ENCODE measurements at regions of chr18 and their contacts with region 1.

Region 1: GRCh38 chr18:681985-682384 is 24.5 kb downstream of the TYMS start:
- DNase-seq: peak; percentile 71
- H3K4me3 Mint-ChIP-seq: peak overlapping the region; percentile 30
- H3K27ac Mint-ChIP-seq: peak overlapping the region; percentile 87
- H3K4me1 Mint-ChIP-seq: peaks cover 25% of the 10 kb centered on the region
- H3K27me3 Mint-ChIP-seq: no peaks in the 10 kb centered on the region

Region 2: GRCh38 chr18:513826-514560 is 168.0 kb before region 1 on chr18:
- intact Hi-C with region 1: no loop called
- DNase-seq: no peak
- H3K4me3 Mint-ChIP-seq: no peak overlapping the region
- H3K27ac Mint-ChIP-seq: no peak overlapping the region
- H3K4me1 Mint-ChIP-seq: peaks cover 10% of the 10 kb centered on the region
- H3K27me3 Mint-ChIP-seq: no peaks in the 10 kb centered on the region

Region 3: DNA sequence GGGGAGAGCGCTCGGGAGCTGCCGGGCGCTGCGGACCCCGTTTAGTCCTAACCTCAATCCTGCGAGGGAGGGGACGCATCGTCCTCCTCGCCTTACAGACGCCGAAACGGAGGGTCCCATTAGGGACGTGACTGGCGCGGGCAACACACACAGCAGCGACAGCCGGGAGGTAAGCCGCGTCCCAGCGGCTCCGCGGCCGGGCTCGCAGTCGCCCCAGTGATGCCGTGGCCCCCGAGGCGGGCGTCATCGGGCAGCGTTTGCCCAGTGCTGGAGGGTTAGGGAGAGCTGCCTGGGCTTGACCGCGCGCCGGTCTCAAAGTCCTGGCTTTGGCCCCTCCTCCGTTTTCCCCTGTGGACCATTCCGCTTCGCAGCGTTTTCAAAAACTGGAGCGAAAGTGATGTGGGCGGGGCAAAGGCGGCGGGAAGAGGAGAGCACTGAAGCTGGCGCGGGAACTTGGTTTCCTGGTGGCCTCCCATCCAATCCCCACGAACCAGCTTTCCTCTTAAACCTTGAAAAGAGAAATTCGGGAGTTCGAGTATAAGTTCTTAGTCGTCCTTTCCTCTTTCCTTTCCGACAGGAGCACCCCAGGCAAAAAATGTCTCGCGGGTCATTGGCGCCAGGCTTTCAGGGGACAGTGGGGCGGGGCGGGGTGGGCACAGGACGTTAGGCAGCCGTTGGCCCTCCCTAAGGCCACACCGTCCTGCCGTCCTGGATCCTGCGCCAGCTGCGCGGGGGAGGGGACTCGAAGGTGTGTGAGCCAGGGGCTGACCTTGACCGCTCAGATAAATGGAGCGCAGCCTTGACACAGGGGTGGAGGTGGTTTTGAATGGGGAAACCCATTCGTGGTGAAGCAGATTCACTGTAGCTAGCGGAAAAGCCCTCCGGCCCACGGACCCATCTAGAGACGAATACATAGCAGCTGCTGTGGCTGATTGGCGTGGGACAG is 23.7 kb before region 1 on chr18:
- intact Hi-C with region 1: loop called (anchors 1 kb)
- DNase-seq: peak; percentile 74
- H3K4me3 Mint-ChIP-seq: peak overlapping the region; percentile 96
- H3K27ac Mint-ChIP-seq: peak overlapping the region; percentile 93
- H3K4me1 Mint-ChIP-seq: peaks cover 39% of the 10 kb centered on the region
- H3K27me3 Mint-ChIP-seq: no peaks in the 10 kb centered on the region

Region 4: GRCh38 chr18:703213-703967 is 21.4 kb after region 1 on chr18:
- intact Hi-C with region 1: loop called (anchors 2 kb)
- DNase-seq: no peak
- H3K4me3 Mint-ChIP-seq: no peak overlapping the region
- H3K27ac Mint-ChIP-seq: peak overlapping the region; percentile 79
- H3K4me1 Mint-ChIP-seq: peaks cover 21% of the 10 kb centered on the region
- H3K27me3 Mint-ChIP-seq: no peaks in the 10 kb centered on the region

Region 5: GRCh38 chr18:950882-951539 is 269.0 kb after region 1 on chr18:
- intact Hi-C with region 1: no loop called
- DNase-seq: no peak
- H3K4me3 Mint-ChIP-seq: no peak overlapping the region
- H3K27ac Mint-ChIP-seq: no peak overlapping the region
- H3K4me1 Mint-ChIP-seq: no peaks in the 10 kb centered on the region
- H3K27me3 Mint-ChIP-seq: no peaks in the 10 kb centered on the region

Measured in activated T-helper 1 cell treated with anti-CD3 and anti-CD28 coated beads, Interleukin-12 subunit alpha, Interleukin-12 subunit beta, Interleukin-2, Interleukin-4 antibody, amounts not matched to agents 30 ng/mL and 10 ng/mL and 1 ng/mL, durations not matched to agents 14 hours and 24 hours and 36 hours (primary cell).